ENCODE measurements at regions of chr9 and their contacts with region 1.

Region 1: GRCh38 chr9:36008774-36009300 is 27.9 kb upstream of the RECK start:
- DNase-seq: peak; percentile 20
- ATAC-seq: peak; percentile 92
- H3K4me3 Mint-ChIP-seq: no peak overlapping the region
- H3K27ac Mint-ChIP-seq: no peak overlapping the region
- H3K4me1 Mint-ChIP-seq: peaks cover 32% of the 10 kb centered on the region
- H3K27me3 Mint-ChIP-seq: peaks cover 19% of the 10 kb centered on the region
- CTCF ChIP-seq: peak; percentile 54

Region 2: GRCh38 chr9:35954942-35955546 is 53.8 kb before region 1 on chr9:
- CTCF ChIA-PET with region 1: interaction called, 5 read pairs
- POLR2A ChIA-PET with region 1: no interaction called
- intact Hi-C with region 1: loop called (anchors 1 kb)
- DNase-seq: no peak
- ATAC-seq: peak; percentile 75
- H3K4me3 Mint-ChIP-seq: no peak overlapping the region
- H3K27ac Mint-ChIP-seq: no peak overlapping the region
- H3K4me1 Mint-ChIP-seq: no peaks in the 10 kb centered on the region
- H3K27me3 Mint-ChIP-seq: peaks cover 22% of the 10 kb centered on the region
- CTCF ChIP-seq: peak; percentile 86

Region 3: DNA sequence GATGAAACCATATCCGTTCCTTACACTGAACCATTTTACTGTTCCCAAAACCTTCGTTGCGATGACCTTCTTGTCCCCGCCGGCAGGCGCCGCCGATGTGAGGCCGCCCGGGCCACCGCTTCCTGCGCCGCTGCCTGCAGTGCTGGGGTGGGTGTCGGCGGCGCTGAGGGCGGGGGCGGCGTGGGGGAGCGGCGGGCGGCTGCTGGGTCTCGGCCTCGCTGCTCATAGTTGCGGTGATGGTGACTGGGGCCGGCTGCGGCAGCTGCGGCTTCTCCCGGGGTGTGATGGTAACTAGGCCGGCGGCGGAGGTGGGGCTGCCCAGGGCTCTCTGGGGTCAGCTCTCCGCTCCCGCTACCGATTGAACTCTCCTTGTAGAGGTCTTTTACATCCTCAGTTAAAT is 36.7 kb before region 1 on chr9:
- CTCF ChIA-PET with region 1: interaction called, 5 read pairs
- POLR2A ChIA-PET with region 1: no interaction called
- intact Hi-C with region 1: loop called (anchors 5 kb)
- DNase-seq: no peak
- ATAC-seq: no peak
- H3K4me3 Mint-ChIP-seq: no peak overlapping the region
- H3K27ac Mint-ChIP-seq: no peak overlapping the region
- H3K4me1 Mint-ChIP-seq: peaks cover 16% of the 10 kb centered on the region
- H3K27me3 Mint-ChIP-seq: peaks cover 60% of the 10 kb centered on the region
- CTCF ChIP-seq: no peak

Region 4: DNA sequence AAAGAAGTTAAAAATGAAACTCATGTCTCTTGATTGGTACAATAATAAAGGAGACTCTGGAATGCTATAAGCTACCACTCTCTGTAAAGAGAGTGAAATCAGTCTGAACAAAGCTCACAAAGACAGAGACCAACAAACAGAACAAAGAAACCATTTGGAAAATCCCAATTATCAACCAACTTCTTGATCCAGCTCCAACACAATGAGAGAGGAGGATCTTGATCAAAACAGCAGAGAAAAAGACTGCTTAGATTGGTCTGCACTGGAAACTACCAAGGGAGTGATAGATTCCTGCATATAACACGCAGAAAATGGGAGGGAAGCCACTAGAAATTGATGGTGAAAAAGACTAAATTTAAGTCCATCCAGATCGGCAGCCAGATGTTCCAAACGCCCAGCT is 414.4 kb after region 1 on chr9:
- CTCF ChIA-PET with region 1: no interaction called
- POLR2A ChIA-PET with region 1: no interaction called
- intact Hi-C with region 1: no loop called
- DNase-seq: no peak
- ATAC-seq: no peak
- H3K4me3 Mint-ChIP-seq: no peak overlapping the region
- H3K27ac Mint-ChIP-seq: no peak overlapping the region
- H3K4me1 Mint-ChIP-seq: peaks cover 2% of the 10 kb centered on the region
- H3K27me3 Mint-ChIP-seq: no peaks in the 10 kb centered on the region
- CTCF ChIP-seq: no peak

Measured in activated B cell treated with CpG ODN at 0.5 μM for 24 hours (primary cell).